Sigmoid colon (tissue), 7 donors: ENCODE measurements at regions of chr4 and their contacts with region 1.

Region 1: DNA sequence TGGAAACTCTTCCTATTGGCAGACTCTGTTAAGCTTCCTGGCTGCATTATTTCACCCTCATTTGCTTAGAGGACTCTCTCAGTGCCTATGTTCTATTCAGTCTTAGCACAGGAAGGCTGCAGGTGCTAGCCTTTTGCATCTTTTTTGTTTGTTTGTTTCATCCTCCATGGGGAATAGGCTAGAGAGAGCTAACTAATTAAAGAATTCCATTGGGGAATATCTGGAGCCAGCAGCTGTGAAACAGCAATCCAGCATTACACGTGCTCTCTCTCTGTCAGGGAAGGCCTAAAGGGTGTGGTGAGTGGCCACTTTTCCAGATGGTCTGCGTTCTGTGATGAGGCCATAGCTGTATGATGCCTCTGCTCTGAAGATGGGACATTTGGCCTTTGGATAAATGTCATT is 633.6 kb downstream of the SPRY1 start:
- DNase-seq: peak; percentile 70
- H3K4me3 ChIP-seq: no peak overlapping the region
- H3K27ac ChIP-seq: peak overlapping the region; percentile 47 to 72 (median 58)
- H3K4me1 ChIP-seq: peaks cover 0 to 52% (median 35%) of the 10 kb centered on the region in 4 donors
- H3K27me3 ChIP-seq: no peaks in the 10 kb centered on the region
- CTCF ChIP-seq: no peak
- EP300 ChIP-seq: no peak
- POLR2A ChIP-seq: no peak

Region 2: DNA sequence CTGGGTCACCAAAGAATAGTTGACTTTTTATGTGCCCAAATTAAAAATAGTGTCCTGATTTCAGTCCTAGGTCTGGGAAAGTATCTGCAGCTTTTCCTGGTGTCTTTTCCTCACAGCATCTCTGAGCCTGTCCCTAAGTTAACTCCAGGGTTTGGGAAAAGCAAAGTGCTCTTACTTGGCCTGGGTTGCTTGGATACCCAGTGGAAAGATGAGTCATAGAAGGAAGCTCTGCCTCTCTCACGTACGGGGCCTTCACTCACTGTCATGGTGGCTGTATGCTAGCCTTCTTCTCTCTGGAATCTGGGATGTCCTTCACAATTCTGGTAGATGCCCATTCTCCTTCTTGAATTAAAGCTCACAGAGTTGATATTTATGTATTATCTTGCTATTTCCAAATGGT is 75.1 kb after region 1 on chr4:
- intact Hi-C with region 1: no loop called
- DNase-seq: no peak
- H3K4me3 ChIP-seq: no peak overlapping the region
- H3K27ac ChIP-seq: no peak overlapping the region
- H3K4me1 ChIP-seq: no peaks in the 10 kb centered on the region
- H3K27me3 ChIP-seq: no peaks in the 10 kb centered on the region
- CTCF ChIP-seq: no peak
- EP300 ChIP-seq: no peak
- POLR2A ChIP-seq: no peak

Region 3: GRCh38 chr4:124199755-124200154 is 169.6 kb after region 1 on chr4:
- intact Hi-C with region 1: loop called (anchors 10 kb)
- DNase-seq: no peak
- H3K4me3 ChIP-seq: no peak overlapping the region
- H3K27ac ChIP-seq: no peak overlapping the region
- H3K4me1 ChIP-seq: peaks cover 0 to 35% (median 26%) of the 10 kb centered on the region in 4 donors
- H3K27me3 ChIP-seq: no peaks in the 10 kb centered on the region
- CTCF ChIP-seq: no peak
- EP300 ChIP-seq: no peak
- POLR2A ChIP-seq: no peak